AG04449 (cell line): ENCODE measurements at regions of chr5 and their contacts with region 1.

Region 1: DNA sequence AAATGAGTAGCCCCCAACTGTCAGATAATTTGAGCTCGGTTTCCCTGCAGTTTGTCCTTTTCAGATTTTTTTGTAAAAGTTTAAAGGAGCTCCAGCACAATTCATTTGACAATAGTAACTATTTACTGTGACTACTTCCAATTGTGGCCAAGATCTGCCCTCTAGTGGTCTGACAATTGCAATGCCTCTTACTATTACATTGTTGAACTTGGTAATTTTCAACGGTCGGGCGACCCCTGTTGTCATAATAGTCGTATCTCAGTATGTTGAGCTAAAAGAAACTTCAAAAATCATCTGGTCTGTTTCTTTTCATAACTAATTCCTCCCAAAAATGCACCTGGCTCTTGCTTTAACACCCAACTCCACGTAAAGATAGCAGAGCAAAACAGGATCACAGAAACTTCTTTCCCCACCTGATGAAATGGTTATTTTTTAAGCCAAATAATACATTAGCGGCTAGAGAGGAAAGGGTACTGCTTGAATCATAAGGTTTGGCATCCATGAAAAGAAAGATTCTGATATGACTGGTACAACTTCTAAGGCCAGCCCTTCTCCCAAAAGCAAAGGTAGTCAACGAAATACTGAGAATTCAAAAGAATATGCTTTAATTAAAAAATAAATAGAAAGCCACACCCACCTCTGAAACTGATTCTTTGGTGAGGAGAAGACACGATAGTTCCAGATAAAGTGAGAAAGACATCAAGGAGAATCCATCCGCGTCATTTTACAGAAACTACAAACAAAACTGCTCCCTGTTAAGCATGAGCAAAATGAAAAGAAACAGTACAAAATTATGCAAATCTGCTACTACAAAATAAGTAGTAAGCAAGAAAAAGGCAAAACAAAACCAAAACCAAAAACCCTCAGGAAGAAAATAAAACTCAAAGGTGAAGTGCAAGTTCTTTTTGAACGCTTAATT is 76.9 kb upstream of the HTR4 start:
- DNase-seq: peak; percentile 38
- H3K4me3 ChIP-seq: no peak overlapping the region
- CTCF ChIP-seq: peak; percentile 75

Region 2: DNA sequence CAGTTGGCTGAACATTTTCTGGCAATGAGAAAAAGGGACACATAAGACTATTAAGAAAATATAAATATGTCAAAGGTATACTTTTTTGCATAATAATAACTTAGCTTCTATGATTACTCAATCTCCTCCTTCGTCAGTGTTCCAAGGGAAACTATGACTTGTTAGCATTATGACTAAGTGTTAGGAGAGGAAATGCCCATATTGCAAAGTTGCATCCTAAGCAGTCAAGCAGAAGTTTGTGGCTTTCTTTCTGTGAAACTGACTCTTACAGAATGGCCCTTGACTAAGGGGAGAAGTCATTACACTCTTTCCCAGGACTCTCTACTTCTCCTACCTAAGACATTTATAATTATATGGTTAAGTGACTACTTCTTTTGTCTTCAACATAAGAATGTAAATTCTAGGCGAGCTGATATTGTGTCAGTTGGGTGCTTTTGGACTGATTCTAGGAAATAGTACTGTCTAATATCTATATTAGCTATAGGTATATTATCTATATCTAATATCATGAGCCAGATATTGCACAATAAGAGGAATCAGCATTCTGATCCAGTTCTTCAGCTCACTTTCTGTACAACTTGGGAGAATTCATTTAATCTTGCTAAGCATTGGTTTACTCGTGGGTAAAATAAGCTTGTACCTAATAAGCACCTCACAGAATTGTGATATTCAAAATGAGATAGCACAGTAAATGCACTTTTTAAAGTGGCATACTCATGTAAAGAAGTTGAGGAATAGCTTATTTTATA is 544.8 kb before region 1 on chr5:
- CTCF ChIA-PET with region 1: interaction called, 101 read pairs
- POLR2A ChIA-PET with region 1: no interaction called
- DNase-seq: no peak
- H3K4me3 ChIP-seq: no peak overlapping the region
- CTCF ChIP-seq: no peak

Region 3: DNA sequence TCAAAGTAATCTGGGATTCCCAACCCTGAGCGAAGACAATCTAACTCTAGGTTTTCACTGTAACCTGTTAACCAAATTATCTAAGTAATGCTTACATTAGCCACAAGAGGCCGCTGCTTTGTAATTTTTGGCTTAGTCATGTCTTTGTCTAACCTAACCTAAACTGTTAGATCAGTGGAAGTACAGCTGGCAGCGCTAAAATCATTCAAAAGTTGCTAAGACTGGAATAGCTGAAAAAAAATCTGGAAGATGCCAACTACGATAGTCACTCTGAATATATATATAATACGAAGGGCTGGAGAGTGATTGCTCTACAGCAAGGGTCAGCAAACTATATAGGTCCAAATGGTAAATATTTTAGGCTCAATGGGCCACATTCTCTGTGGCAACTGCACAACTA is 287.2 kb before region 1 on chr5:
- CTCF ChIA-PET with region 1: interaction called, 342 read pairs
- POLR2A ChIA-PET with region 1: no interaction called
- DNase-seq: peak; percentile 14
- H3K4me3 ChIP-seq: no peak overlapping the region
- CTCF ChIP-seq: peak; percentile 63

Region 4: DNA sequence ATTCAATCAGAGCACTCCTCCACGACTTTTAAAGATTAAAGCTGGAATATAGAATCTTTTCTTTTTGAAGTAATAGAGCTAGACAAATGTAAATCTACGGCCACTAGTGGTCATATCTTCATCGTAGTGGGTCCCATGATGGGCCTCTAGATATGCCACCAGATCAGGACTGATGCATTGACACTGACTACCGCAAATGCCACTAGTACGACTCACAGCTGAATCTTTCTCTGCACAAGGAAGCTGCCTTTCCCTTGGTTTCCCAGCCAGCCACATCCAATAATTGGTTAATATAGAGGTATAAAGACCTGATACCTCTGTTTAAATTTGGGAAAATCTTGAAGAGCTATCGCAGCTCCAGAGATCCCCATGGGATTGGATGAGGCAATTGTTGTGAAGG is 57.4 kb after region 1 on chr5:
- CTCF ChIA-PET with region 1: interaction called, 11 read pairs
- POLR2A ChIA-PET with region 1: no interaction called
- DNase-seq: no peak
- H3K4me3 ChIP-seq: no peak overlapping the region
- CTCF ChIP-seq: no peak

Region 5: GRCh38 chr5:149035372-149035790 is 304.2 kb after region 1 on chr5:
- CTCF ChIA-PET with region 1: interaction called, 911 read pairs
- POLR2A ChIA-PET with region 1: no interaction called
- DNase-seq: no peak
- H3K4me3 ChIP-seq: no peak overlapping the region
- CTCF ChIP-seq: peak; percentile 92

Region 6: DNA sequence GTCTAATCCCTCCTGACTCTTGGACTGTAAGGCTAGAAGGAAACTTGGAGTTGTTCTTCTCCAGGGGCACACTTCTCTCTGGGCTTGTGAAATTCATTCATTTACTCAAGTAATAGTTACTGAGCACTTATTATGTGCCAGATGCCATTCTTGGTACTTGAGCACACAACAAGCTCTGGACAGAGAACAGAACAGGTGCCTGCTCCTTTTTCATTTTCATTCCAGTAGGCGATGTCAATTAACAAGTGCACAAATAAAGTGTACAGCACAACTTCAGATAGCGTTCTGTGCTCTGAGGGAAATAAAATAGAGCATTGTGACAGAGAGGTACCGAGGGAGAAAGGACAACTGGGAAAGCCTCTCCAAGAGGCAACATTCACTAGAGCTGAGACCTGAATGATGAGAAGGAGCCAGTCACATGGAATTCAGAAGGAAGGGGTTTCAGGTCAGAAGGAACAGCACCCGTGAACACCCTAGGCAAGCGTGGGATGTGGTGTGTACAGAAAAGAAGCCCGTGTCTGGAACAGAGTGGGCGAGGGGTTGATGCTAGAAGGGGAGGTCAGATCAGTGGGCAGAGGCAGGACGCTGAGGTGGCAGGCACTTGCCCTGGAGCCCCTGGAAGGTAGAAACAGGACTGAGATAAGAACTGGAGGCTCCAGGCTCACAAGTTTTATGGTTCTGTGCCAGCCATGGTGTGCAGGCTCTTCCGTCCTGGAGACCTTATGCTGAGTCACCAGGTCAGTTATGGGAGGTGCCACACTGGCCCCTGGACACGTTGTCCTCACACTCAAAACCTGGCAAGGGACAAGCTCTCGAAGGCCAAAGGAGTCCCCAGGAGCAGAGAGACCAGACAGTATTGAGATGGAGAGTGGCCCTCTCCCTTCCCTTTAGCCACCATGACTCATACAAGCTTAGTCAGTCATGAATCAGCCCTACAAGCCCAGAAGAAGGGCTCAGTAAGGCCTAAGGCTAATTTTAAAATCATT is 402.9 kb after region 1 on chr5:
- CTCF ChIA-PET with region 1: interaction called, 10 read pairs
- POLR2A ChIA-PET with region 1: no interaction called
- DNase-seq: no peak
- H3K4me3 ChIP-seq: no peak overlapping the region
- CTCF ChIP-seq: no peak